Ascending aorta (tissue), 2 donors: ENCODE measurements at regions of chr4 and their contacts with region 1.

Region 1: GRCh38 chr4:187124331-187124730 is 400.7 kb upstream of the FAT1 start:
- DNase-seq: no peak
- H3K4me3 ChIP-seq: no peak overlapping the region
- H3K27ac ChIP-seq: no peak overlapping the region
- H3K4me1 ChIP-seq: no peaks in the 10 kb centered on the region
- H3K27me3 ChIP-seq: no peaks in the 10 kb centered on the region
- CTCF ChIP-seq: no peak

Region 2: DNA sequence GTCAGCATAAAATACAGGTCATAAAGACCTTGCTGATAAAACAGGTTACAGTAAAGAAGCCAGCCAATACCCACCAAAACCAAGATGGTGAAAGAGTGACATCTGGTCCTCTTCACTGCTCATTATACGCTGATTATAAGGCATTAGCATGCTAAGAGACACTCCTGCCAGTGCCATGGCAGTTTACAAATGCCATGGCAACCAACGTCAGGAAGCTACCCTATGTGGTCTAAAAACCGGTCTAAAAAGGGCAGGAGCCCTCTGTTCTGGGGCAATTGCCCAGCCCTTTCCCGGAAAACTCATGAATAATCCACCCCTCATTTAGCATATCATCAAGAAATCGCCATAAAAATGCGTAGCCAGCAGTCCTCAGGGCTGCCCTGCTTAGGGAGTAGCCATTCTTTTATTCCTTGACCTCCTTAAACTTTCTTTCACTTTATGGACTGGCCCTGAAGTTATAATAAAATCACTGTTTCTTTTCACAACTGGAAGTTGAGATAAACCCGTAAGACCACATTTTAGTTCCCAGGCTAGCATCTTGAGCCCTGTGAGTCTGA is 140.2 kb before region 1 on chr4:
- intact Hi-C with region 1: no loop called
- DNase-seq: no peak
- H3K4me3 ChIP-seq: no peak overlapping the region
- H3K27ac ChIP-seq: no peak overlapping the region
- H3K4me1 ChIP-seq: no peaks in the 10 kb centered on the region
- H3K27me3 ChIP-seq: no peaks in the 10 kb centered on the region
- CTCF ChIP-seq: no peak

Region 3: GRCh38 chr4:187141101-187141500 is 16.8 kb after region 1 on chr4:
- intact Hi-C with region 1: loop called (anchors 2 kb)
- DNase-seq: no peak
- H3K4me3 ChIP-seq: no peak overlapping the region
- H3K27ac ChIP-seq: no peak overlapping the region
- H3K4me1 ChIP-seq: no peaks in the 10 kb centered on the region
- H3K27me3 ChIP-seq: no peaks in the 10 kb centered on the region
- CTCF ChIP-seq: no peak

Region 4: DNA sequence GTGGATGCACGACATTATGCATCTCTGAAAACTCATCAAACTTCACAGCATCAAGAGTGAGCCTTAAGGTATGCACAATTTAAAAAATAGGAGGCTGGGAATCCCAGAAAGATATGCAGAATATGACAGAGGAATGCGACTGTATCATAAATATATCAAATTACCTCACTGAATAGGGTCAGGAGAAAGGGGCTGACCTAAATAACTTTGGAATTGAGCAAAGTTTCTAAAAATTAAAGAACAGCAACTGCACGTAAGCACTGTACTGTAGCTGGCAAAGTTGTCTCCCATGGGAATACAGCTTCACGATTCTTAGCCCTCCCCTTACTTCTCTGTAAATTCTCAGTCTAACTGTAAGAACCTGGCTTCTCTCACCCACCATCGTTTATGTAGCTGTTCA is 473.9 kb after region 1 on chr4:
- intact Hi-C with region 1: no loop called
- DNase-seq: no peak
- H3K4me3 ChIP-seq: no peak overlapping the region
- H3K27ac ChIP-seq: no peak overlapping the region
- H3K4me1 ChIP-seq: peaks cover 0 to 6% of the 10 kb centered on the region in 2 donors
- H3K27me3 ChIP-seq: no peaks in the 10 kb centered on the region
- CTCF ChIP-seq: no peak